K562 (cell line): ENCODE measurements at regions of chr18 and their contacts with region 1.

Region 1: GRCh38 chr18:7575157-7576028 is 8.3 kb downstream of the PTPRM start:
- DNase-seq: no peak
- ATAC-seq: peak; percentile 81
- H3K4me3 ChIP-seq: no peak overlapping the region
- H3K27ac ChIP-seq: no peak overlapping the region
- H3K4me1 ChIP-seq: no peaks in the 10 kb centered on the region
- H3K27me3 ChIP-seq: no peaks in the 10 kb centered on the region
- CTCF ChIP-seq: no peak
- EP300 ChIP-seq: no peak
- POLR2A ChIP-seq: no peak
- RAD21 ChIP-seq: no peak

Region 2: GRCh38 chr18:7383002-7383980 is 192.1 kb before region 1 on chr18:
- CTCF ChIA-PET with region 1: no interaction called
- POLR2A ChIA-PET with region 1: no interaction called
- in situ Hi-C with region 1: no loop called
- intact Hi-C with region 1: no loop called
- DNase-seq: no peak
- ATAC-seq: no peak
- H3K4me3 ChIP-seq: no peak overlapping the region
- H3K27ac ChIP-seq: no peak overlapping the region
- H3K4me1 ChIP-seq: no peaks in the 10 kb centered on the region
- H3K27me3 ChIP-seq: no peaks in the 10 kb centered on the region
- CTCF ChIP-seq: no peak
- EP300 ChIP-seq: no peak
- POLR2A ChIP-seq: no peak
- RAD21 ChIP-seq: no peak

Region 3: GRCh38 chr18:7557973-7558372 is 17.4 kb before region 1 on chr18:
- CTCF ChIA-PET with region 1: no interaction called
- POLR2A ChIA-PET with region 1: no interaction called
- in situ Hi-C with region 1: no loop called
- intact Hi-C with region 1: no loop called
- DNase-seq: no peak
- ATAC-seq: no peak
- H3K4me3 ChIP-seq: no peak overlapping the region
- H3K27ac ChIP-seq: no peak overlapping the region
- H3K4me1 ChIP-seq: no peaks in the 10 kb centered on the region
- H3K27me3 ChIP-seq: no peaks in the 10 kb centered on the region; a peak in 2 of 5 replicates
- CTCF ChIP-seq: no peak
- EP300 ChIP-seq: no peak
- POLR2A ChIP-seq: no peak
- RAD21 ChIP-seq: no peak

Region 4: DNA sequence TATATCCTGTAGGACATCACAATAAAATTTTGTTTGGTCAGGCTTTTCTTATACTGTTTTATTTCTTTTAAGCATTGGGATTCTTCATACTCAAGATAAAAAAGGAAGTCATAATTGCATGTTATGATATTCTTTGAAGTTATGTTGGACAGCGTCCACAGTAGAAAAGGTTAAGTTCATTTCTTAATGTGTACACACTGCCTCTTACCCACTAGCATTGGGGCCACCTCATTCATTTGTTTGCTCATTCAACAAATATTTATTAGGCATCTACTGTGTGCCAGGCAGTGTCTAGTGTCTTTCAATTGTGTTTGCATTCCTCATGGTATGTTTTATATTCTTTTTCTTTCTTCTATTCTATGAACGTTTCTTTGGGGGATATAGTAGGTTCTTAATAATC is 61.9 kb after region 1 on chr18:
- CTCF ChIA-PET with region 1: no interaction called
- POLR2A ChIA-PET with region 1: no interaction called
- in situ Hi-C with region 1: no loop called
- intact Hi-C with region 1: loop called (anchors 10 kb)
- DNase-seq: no peak
- ATAC-seq: no peak
- H3K4me3 ChIP-seq: no peak overlapping the region
- H3K27ac ChIP-seq: no peak overlapping the region
- H3K4me1 ChIP-seq: no peaks in the 10 kb centered on the region
- H3K27me3 ChIP-seq: no peaks in the 10 kb centered on the region
- CTCF ChIP-seq: no peak
- EP300 ChIP-seq: no peak
- POLR2A ChIP-seq: no peak
- RAD21 ChIP-seq: no peak